HepG2 (cell line): ENCODE measurements at regions of chr22 and their contacts with region 1.

Region 1: GRCh38 chr22:36425977-36426523 is 38.3 kb upstream of the MYH9 start:
- DNase-seq: peak; percentile 74
- ATAC-seq: peak; percentile 93
- H3K4me3 ChIP-seq: no peak overlapping the region
- H3K27ac ChIP-seq: peak overlapping the region; percentile 71
- H3K4me1 ChIP-seq: peaks cover 69% of the 10 kb centered on the region
- H3K27me3 ChIP-seq: no peaks in the 10 kb centered on the region
- CTCF ChIP-seq: peak; percentile 53
- EP300 ChIP-seq: no peak; a peak in 1 of 4 replicates
- POLR2A ChIP-seq: peak in 1 of 2 experiments; percentile 34; a peak in 1 of 4 replicates
- RAD21 ChIP-seq: no peak

Region 2: GRCh38 chr22:36110306-36110881 is 315.7 kb before region 1 on chr22:
- CTCF ChIA-PET with region 1: no interaction called
- POLR2A ChIA-PET with region 1: no interaction called
- in situ Hi-C with region 1: no loop called
- intact Hi-C with region 1: no loop called
- DNase-seq: no peak
- ATAC-seq: peak; percentile 59
- H3K4me3 ChIP-seq: peak overlapping the region in 1 of 3 experiments; percentile 58; a peak in 1 of 6 replicates
- H3K27ac ChIP-seq: no peak overlapping the region
- H3K4me1 ChIP-seq: peaks cover 13% of the 10 kb centered on the region
- H3K27me3 ChIP-seq: peaks cover 0 to 11% of the 10 kb centered on the region in 2 experiments; a peak in 1 of 5 replicates
- CTCF ChIP-seq: no peak
- EP300 ChIP-seq: no peak
- POLR2A ChIP-seq: no peak
- RAD21 ChIP-seq: no peak

Region 3: GRCh38 chr22:36445158-36445668 is 19.2 kb after region 1 on chr22:
- CTCF ChIA-PET with region 1: no interaction called
- POLR2A ChIA-PET with region 1: interaction called, 11 read pairs
- in situ Hi-C with region 1: no loop called
- intact Hi-C with region 1: no loop called
- DNase-seq: peak; percentile 47
- ATAC-seq: peak; percentile 73
- H3K4me3 ChIP-seq: peak overlapping the region; percentile 24 to 64 (median 44); a peak in 5 of 6 replicates
- H3K27ac ChIP-seq: no peak overlapping the region
- H3K4me1 ChIP-seq: peaks cover 76% of the 10 kb centered on the region
- H3K27me3 ChIP-seq: no peaks in the 10 kb centered on the region; a peak in 1 of 5 replicates
- CTCF ChIP-seq: no peak
- EP300 ChIP-seq: no peak
- POLR2A ChIP-seq: no peak
- RAD21 ChIP-seq: no peak